ENCODE measurements at regions of chr16 and their contacts with region 1.

Region 1: DNA sequence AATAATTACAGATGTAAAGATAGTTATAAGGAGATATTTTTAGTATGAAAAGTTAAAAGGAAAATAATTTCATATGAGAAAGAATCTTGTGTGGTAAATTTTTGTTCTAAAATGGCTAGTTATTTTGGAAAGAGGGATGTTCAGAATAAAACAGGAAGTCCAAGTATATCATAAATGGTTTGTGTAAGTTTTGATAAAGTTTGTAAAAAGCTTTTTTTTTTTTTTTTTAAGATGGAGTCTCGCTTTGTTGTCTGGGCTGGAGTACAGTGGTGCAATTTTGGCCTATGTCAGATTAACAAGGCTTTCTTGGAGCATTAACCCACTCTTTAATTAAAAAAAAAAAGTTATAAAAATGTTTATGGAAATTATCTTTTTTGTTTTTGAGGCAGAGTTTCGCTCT is 8.2 kb upstream of the CDK10 start:
- DNase-seq: no peak
- ATAC-seq: no peak
- H3K4me3 ChIP-seq: no peak overlapping the region
- H3K27ac ChIP-seq: no peak overlapping the region
- H3K4me1 ChIP-seq: no peaks in the 10 kb centered on the region
- H3K27me3 ChIP-seq: no peaks in the 10 kb centered on the region
- CTCF ChIP-seq: no peak

Region 2: DNA sequence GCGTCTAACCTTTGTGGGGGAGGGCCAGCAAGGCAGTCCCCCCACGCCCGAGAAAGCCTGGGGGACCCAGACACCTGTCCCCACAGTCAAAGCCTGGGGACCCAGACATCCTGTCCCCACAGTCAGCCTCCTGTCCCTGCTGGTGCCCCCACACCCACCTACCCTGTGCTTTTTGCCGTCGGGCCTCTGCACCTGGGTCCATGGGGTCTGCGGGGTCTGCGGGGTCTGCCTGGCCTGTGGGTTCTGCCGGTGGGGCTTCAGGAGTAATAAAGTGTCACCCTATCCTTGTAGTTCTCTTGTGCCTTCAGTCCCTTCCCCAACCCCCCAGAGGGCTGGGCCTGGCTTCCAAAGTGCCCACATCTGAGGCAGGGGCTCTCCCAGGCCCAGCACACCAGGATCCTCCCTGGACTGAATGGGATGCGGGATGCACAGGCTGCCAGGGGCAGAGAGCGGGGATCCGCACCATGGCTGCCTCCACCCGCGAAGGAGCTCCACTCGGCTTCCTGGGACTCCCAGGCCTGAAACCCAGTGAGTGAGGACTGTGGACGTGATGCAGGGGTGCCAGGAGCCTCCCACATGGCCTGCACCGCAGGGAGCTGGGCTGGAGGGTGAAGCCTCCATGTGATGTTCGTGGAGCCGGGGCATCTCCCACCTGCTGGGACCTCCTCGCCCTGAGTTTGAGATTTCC is 81.2 kb before region 1 on chr16:
- CTCF ChIA-PET with region 1: interaction called, 12 read pairs
- POLR2A ChIA-PET with region 1: no interaction called
- in situ Hi-C with region 1: no loop called
- intact Hi-C with region 1: no loop called
- DNase-seq: no peak
- ATAC-seq: peak; percentile 27; the same call in 1 of the 2 replicates
- H3K4me3 ChIP-seq: no peak overlapping the region
- H3K27ac ChIP-seq: no peak overlapping the region
- H3K4me1 ChIP-seq: peaks cover 3% of the 10 kb centered on the region
- H3K27me3 ChIP-seq: no peaks in the 10 kb centered on the region
- CTCF ChIP-seq: no peak

Region 3: GRCh38 chr16:89667633-89668032 is 10.6 kb before region 1 on chr16:
- CTCF ChIA-PET with region 1: no interaction called
- POLR2A ChIA-PET with region 1: no interaction called
- in situ Hi-C with region 1: no loop called
- intact Hi-C with region 1: no loop called
- DNase-seq: no peak
- ATAC-seq: no peak
- H3K4me3 ChIP-seq: no peak overlapping the region
- H3K27ac ChIP-seq: no peak overlapping the region
- H3K4me1 ChIP-seq: no peaks in the 10 kb centered on the region
- H3K27me3 ChIP-seq: no peaks in the 10 kb centered on the region
- CTCF ChIP-seq: no peak